ENCODE measurements at regions of chr3 and their contacts with region 1.

Region 1: DNA sequence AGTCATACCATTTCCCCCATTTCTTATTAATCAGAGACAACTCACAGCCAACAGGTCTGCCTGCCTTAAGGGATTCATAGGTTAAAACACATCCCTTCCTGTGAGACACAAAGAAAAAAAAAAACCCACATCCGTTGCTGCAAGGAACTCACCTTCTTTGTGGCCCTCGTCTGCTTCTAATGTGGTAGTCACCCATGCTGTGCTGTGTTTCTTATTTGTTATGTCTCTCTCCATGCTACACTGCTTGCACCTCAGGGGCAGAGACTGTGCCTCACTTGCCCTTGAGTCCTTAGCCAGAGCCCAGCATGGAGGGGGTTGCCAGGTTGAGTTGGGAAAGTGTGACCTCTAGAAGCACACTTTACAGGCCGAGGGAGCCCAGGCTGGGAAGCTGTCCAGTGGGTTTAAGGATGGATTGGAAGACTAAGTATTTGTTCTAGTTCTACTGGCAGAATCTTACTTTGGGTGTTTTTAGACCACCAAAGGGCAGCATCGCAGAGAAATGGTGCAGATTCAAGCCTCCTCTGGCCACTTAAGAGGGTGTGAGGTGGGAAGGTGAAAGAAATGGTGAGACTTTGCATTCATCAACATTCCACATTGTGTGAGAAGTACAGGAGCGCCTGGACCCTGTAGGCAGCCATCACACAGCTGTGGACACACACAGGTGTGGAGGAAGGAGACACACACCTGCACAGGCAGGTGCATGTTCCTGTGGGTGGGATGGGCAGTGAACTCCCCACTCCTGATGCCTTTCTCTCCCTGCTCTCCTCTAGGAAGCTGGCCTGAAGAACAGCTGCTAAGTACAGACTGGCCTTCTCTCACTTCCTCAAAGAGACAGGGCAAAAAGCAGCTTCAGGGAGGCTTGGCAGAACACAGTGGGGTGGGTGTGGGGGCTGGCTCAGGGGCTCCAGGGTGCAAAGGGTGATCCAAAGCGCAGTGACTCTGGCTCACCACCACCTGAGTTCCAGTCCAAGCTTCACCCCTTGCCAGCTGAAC is 48.8 kb downstream of the GLB1 start:
- DNase-seq: peak; percentile 80
- ATAC-seq: peak; percentile 88
- H3K4me3 Mint-ChIP-seq: peak overlapping the region; percentile 74
- H3K27ac Mint-ChIP-seq: peak overlapping the region; percentile 96
- H3K4me1 Mint-ChIP-seq: peaks cover 76% of the 10 kb centered on the region
- H3K27me3 Mint-ChIP-seq: no peaks in the 10 kb centered on the region

Region 2: DNA sequence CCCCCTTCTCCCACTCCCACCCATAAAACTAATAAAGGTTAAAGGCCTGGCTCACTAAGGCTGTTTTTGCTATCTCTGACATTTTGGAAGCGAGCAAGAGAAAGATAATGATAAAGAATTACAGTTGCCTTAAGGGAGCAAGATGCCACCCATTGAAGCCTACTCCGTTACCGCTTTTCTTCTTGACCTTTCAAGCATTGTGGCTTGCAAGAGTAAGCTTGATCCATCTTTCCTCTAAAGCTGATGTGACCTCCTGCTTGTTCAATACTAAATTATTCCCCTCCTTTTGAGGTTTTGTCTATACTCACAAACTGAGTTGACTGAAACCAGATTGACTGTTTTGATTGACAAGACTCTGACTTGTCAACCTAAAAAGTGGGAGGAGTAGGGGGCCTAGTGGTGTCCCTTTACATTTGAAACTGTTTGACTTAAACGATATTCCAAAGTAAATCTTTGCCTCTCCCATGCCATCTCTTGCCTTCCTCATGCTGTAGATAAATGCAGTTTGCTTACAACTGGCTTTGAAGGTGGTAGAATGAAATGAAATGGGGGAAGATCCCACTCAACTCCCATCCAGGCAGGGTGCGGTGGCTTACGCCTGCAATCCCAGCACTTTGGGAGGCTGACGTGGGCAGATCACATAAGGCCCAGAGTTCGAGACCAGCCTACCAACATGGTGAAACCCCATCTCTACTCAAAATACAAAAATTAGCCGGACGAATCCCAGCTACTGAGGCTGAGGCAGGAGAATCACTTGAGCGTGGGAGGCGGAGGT is 222.3 kb before region 1 on chr3:
- CTCF ChIA-PET with region 1: no interaction called
- POLR2A ChIA-PET with region 1: no interaction called
- DNase-seq: no peak
- ATAC-seq: no peak
- H3K4me3 Mint-ChIP-seq: no peak overlapping the region
- H3K27ac Mint-ChIP-seq: no peak overlapping the region
- H3K4me1 Mint-ChIP-seq: no peaks in the 10 kb centered on the region
- H3K27me3 Mint-ChIP-seq: peaks cover 27% of the 10 kb centered on the region

Region 3: GRCh38 chr3:33063651-33064051 is 15.5 kb after region 1 on chr3:
- CTCF ChIA-PET with region 1: interaction called, 19 read pairs
- POLR2A ChIA-PET with region 1: interaction called, 9 read pairs
- DNase-seq: peak; percentile 78
- ATAC-seq: peak; percentile 85
- H3K4me3 Mint-ChIP-seq: peak overlapping the region; percentile 52
- H3K27ac Mint-ChIP-seq: peak overlapping the region; percentile 89
- H3K4me1 Mint-ChIP-seq: peaks cover 73% of the 10 kb centered on the region
- H3K27me3 Mint-ChIP-seq: no peaks in the 10 kb centered on the region

Region 4: DNA sequence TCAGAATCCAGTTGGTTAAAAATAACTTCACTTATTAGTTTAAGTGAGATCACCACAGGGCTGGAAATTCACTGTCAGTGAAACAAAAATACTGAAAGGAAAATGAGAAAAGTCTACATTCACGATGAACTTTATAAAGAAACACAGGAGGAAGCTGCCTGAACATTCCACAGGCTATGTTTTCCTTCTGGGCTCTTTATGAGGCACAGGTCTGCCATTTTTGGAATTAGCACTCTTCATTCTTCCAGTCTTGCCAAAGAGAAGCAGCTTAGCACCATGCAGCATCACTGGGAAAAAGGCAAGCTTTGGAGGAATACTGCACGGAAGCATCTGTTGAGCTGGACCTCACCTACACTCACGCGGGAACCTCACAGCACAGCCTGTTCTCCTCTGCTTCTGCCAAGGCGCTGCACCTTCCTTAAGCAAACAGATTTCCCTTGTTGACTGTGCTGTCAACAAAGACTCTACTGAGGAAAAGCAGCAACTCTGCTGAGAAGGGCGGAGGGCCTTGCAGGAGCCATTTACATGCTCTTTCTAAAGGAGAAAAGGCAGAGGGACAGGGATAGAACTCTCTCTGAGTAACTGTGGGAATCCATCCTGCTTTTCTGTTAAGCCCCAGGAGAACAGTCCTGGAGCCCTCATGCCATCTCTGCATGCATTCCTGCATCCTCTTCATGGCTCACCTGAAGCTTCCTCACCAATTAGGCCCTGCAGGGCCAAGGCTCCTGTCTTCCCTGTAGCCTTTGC is 154.7 kb after region 1 on chr3:
- CTCF ChIA-PET with region 1: no interaction called
- POLR2A ChIA-PET with region 1: no interaction called
- DNase-seq: no peak
- ATAC-seq: no peak
- H3K4me3 Mint-ChIP-seq: no peak overlapping the region
- H3K27ac Mint-ChIP-seq: no peak overlapping the region
- H3K4me1 Mint-ChIP-seq: no peaks in the 10 kb centered on the region
- H3K27me3 Mint-ChIP-seq: peaks cover 4% of the 10 kb centered on the region

Measured in activated CD8-positive, alpha-beta T cell treated with anti-CD3 and anti-CD28 coated beads, Interleukin-2, amount 10 ng/mL, durations not matched to agents 7 days and 5 days (primary cell).